PC-9 (cell line): ENCODE measurements at regions of chr7 and their contacts with region 1.

Region 1: GRCh38 chr7:27112955-27113949 is 10.8 kb upstream of the HOXA2 start:
- DNase-seq: peak; percentile 76 to 90
- H3K4me3 ChIP-seq: peak overlapping the region; percentile 80
- H3K27ac ChIP-seq: peak overlapping the region; percentile 92
- H3K4me1 ChIP-seq: peaks cover 47% of the 10 kb centered on the region
- H3K27me3 ChIP-seq: no peaks in the 10 kb centered on the region
- CTCF ChIP-seq: no peak

Region 2: GRCh38 chr7:26864309-26865093 is 248.8 kb before region 1 on chr7 and contains the start of gene SKAP2:
- CTCF ChIA-PET with region 1: no interaction called
- POLR2A ChIA-PET with region 1: interaction called, 3 read pairs
- intact Hi-C with region 1: loop called (anchors 1 kb)
- DNase-seq: peak; percentile 98 to 100
- H3K4me3 ChIP-seq: peak within 1 kb of the TSS; percentile 77
- H3K27ac ChIP-seq: peak within 1 kb of the TSS; percentile 84
- H3K4me1 ChIP-seq: peaks cover 58% of the 10 kb centered on the region
- H3K27me3 ChIP-seq: no peaks in the 10 kb centered on the region
- CTCF ChIP-seq: no peak
- total RNA-seq, gene SKAP2: 59.2 and 74.9 TPM in 2 replicates

Region 3: GRCh38 chr7:26918241-26918640 is 195.0 kb before region 1 on chr7:
- CTCF ChIA-PET with region 1: no interaction called
- POLR2A ChIA-PET with region 1: no interaction called
- intact Hi-C with region 1: loop called (anchors 1 kb)
- DNase-seq: peak in 1 of 2 experiments; percentile 91
- H3K4me3 ChIP-seq: no peak overlapping the region
- H3K27ac ChIP-seq: no peak overlapping the region
- H3K4me1 ChIP-seq: peaks cover 12% of the 10 kb centered on the region
- H3K27me3 ChIP-seq: no peaks in the 10 kb centered on the region
- CTCF ChIP-seq: no peak

Region 4: DNA sequence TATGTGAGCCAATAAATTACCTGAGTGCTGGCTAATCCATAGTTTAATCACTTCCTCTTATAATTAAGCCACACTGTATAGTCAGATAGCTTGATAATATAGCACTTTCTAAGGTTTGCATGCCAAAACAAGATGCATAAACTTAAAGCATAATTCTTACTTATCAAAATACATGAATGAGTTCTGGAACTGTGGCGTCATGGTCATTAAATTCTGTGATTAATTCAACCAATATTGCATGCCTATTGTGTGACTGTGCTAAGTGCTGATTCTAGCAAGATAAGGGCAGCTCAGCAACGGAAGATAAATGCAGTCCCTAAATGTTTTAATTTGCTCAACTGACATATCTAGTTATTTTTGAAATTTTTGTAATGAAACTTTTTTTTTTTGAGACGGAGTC is 47.1 kb before region 1 on chr7:
- CTCF ChIA-PET with region 1: no interaction called
- POLR2A ChIA-PET with region 1: no interaction called
- intact Hi-C with region 1: loop called (anchors 1 kb)
- DNase-seq: peak in 1 of 2 experiments; percentile 90
- H3K4me3 ChIP-seq: no peak overlapping the region
- H3K27ac ChIP-seq: peak overlapping the region; percentile 30
- H3K4me1 ChIP-seq: peaks cover 60% of the 10 kb centered on the region
- H3K27me3 ChIP-seq: no peaks in the 10 kb centered on the region
- CTCF ChIP-seq: no peak

Region 5: GRCh38 chr7:27080844-27081436 is 32.3 kb before region 1 on chr7:
- CTCF ChIA-PET with region 1: interaction called, 3 read pairs
- POLR2A ChIA-PET with region 1: interaction called, 3 read pairs
- intact Hi-C with region 1: loop called (anchors 1 kb)
- DNase-seq: peak; percentile 59 to 94
- H3K4me3 ChIP-seq: peak overlapping the region; percentile 12; the same call in 1 of the 2 replicates
- H3K27ac ChIP-seq: peak overlapping the region; percentile 84
- H3K4me1 ChIP-seq: peaks cover 55% of the 10 kb centered on the region
- H3K27me3 ChIP-seq: no peaks in the 10 kb centered on the region
- CTCF ChIP-seq: no peak